ENCODE measurements at regions of chr20 and their contacts with region 1.

Region 1: DNA sequence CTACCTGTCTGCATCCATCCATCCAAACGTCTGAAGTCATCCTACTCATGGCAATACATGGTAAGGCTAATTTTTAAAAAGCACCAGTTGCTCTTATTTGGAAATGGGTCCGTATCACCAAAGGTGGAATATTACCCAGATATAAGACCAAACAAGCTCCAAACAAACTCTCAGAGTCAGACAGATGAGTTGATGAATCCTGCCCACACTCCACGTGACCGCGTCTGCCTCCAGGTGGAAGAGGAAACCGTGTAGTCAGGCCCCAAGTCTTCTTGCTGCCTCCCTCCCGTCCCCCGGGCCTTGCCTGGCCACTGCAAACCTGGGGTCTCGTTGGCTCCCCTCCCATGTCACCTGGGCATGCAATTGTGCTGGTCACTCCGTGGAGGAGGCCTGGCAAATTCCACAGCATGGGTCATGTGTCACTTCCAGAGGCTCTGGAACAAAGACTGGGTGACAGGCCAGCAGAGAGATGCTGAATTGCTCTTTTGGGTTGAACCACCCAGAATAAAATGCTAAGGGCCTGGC is 31.8 kb downstream of the CTCFL start:
- DNase-seq: peak in 1 of 2 donors; percentile 80
- H3K4me3 ChIP-seq: no peak overlapping the region
- CTCF ChIP-seq: no peak
- POLR2A ChIP-seq: no peak

Region 2: GRCh38 chr20:57380081-57380881 is 112.9 kb before region 1 on chr20:
- intact Hi-C with region 1: loop called (anchors 2 kb)
- DNase-seq: peak in 1 of 2 donors; percentile 49
- H3K4me3 ChIP-seq: no peak overlapping the region
- CTCF ChIP-seq: no peak
- POLR2A ChIP-seq: no peak

Region 3: GRCh38 chr20:57546956-57547649 is 54.0 kb after region 1 on chr20:
- intact Hi-C with region 1: no loop called
- DNase-seq: no peak
- H3K4me3 ChIP-seq: no peak overlapping the region
- CTCF ChIP-seq: no peak
- POLR2A ChIP-seq: no peak

Measured in lower leg skin (tissue), 4 donors.